ENCODE measurements at regions of chr1 and their contacts with region 1.

Region 1: DNA sequence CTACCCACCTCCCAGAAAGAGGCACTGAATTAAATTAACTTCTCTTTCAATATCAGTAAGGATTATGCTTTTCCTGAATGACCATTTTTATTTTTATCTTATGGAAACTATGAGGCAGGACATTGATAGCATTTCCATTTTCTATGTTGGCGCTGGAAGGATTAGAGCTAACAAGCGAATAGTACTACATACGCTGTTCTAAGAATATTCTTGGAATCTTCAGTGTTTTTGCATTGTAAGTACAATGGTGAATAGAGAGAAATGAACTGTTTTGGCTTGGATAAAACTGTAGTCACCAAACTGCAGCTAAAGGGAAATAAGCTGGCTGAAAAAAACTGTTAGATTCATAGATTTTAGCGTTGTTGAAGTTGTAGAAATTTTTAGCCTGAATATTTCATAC is 779.0 kb upstream of the ADGRL4 start:
- DNase-seq: no peak
- ATAC-seq: no peak
- H3K4me3 ChIP-seq: no peak overlapping the region
- H3K27ac ChIP-seq: no peak overlapping the region
- H3K4me1 ChIP-seq: no peaks in the 10 kb centered on the region
- H3K27me3 ChIP-seq: no peaks in the 10 kb centered on the region
- CTCF ChIP-seq: no peak
- POLR2A ChIP-seq: no peak
- RAD21 ChIP-seq: no peak

Region 2: DNA sequence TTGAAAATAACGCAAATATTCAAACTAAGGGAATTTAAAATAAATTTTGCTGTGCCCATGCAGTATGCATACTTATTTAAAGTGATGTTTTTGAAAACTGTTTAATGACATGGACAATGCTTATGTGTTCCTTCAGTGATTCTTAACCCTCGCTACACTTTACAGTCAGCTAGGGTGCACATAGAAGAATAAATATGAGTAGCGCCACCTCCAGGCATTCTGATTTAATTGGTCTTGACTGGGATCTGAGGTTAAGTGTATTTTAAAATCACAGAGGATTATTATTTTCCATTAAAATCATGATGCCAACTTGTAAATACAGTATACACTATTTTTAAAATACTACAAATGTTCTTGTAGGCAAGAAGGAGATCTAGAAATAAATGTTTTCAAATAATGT is 405.5 kb before region 1 on chr1:
- CTCF ChIA-PET with region 1: no interaction called
- POLR2A ChIA-PET with region 1: no interaction called
- dilution Hi-C with region 1: no loop called
- in situ Hi-C with region 1: no loop called
- intact Hi-C with region 1: no loop called
- DNase-seq: no peak
- ATAC-seq: no peak
- H3K4me3 ChIP-seq: no peak overlapping the region
- H3K27ac ChIP-seq: no peak overlapping the region
- H3K4me1 ChIP-seq: no peaks in the 10 kb centered on the region
- H3K27me3 ChIP-seq: no peaks in the 10 kb centered on the region
- CTCF ChIP-seq: no peak
- POLR2A ChIP-seq: no peak
- RAD21 ChIP-seq: no peak

Region 3: GRCh38 chr1:79539001-79539400 is 246.6 kb before region 1 on chr1:
- CTCF ChIA-PET with region 1: no interaction called
- POLR2A ChIA-PET with region 1: no interaction called
- dilution Hi-C with region 1: no loop called
- in situ Hi-C with region 1: no loop called
- intact Hi-C with region 1: no loop called
- DNase-seq: no peak
- ATAC-seq: no peak
- H3K4me3 ChIP-seq: no peak overlapping the region
- H3K27ac ChIP-seq: no peak overlapping the region
- H3K4me1 ChIP-seq: no peaks in the 10 kb centered on the region
- H3K27me3 ChIP-seq: no peaks in the 10 kb centered on the region
- CTCF ChIP-seq: no peak
- POLR2A ChIP-seq: no peak
- RAD21 ChIP-seq: no peak

Region 4: GRCh38 chr1:79797487-79797886 is 11.9 kb after region 1 on chr1:
- CTCF ChIA-PET with region 1: no interaction called
- POLR2A ChIA-PET with region 1: no interaction called
- dilution Hi-C with region 1: no loop called
- in situ Hi-C with region 1: no loop called
- intact Hi-C with region 1: loop called (anchors 1 kb)
- DNase-seq: no peak
- ATAC-seq: no peak
- H3K4me3 ChIP-seq: no peak overlapping the region
- H3K27ac ChIP-seq: no peak overlapping the region
- H3K4me1 ChIP-seq: no peaks in the 10 kb centered on the region
- H3K27me3 ChIP-seq: no peaks in the 10 kb centered on the region
- CTCF ChIP-seq: no peak
- POLR2A ChIP-seq: no peak
- RAD21 ChIP-seq: no peak